CD8-positive, alpha-beta memory T cell (primary cell): ENCODE measurements at regions of chr1 and their contacts with region 1.

Region 1: DNA sequence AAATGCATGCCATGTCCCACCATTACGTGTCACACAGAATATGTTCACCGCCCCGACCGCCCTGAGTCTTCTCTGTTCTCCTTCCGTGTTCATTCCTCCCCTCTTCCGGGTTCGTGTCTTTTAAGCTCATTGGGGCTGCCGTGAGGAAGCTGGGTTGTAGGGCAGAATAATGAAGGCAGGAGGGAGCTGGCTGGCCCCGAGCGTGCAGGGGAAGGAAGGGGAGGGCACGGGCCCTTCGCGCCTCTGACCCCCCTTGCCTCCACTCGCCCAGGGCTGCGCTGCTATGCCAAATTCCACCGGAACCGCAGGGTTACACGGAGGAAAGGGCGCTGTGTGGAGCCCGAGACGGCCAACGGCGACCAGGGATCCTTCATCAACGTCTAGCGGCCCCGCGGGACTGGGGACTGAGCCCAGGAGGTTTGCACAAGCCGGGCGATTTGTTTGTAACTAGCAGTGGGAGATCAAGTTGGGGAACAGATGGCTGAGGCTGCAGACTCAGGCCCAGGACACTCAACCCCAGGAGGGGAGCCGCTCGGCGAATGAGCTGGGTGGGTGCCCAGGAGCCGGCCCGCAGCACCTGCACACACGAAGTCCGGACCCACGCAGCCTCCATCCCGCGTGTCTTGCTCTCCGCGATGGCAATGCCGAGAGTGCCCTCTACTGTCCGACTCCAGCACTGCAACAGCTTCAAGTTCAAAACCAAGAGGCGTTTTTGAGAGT is 16.5 kb upstream of the AGTRAP start:
- DNase-seq: peak; percentile 80 to 90 (median 82)
- H3K4me3 ChIP-seq: peak overlapping the region; percentile 63
- H3K4me3 Mint-ChIP-seq: peak overlapping the region; percentile 67 to 93 (median 84)
- H3K27ac ChIP-seq: peak overlapping the region; percentile 51
- H3K27ac Mint-ChIP-seq: peak overlapping the region; percentile 88 to 98 (median 95)
- H3K4me1 ChIP-seq: peaks cover 12% of the 10 kb centered on the region
- H3K4me1 Mint-ChIP-seq: peaks cover 12 to 16% (median 16%) of the 10 kb centered on the region in 3 donors
- H3K27me3 ChIP-seq: no peaks in the 10 kb centered on the region
- H3K27me3 Mint-ChIP-seq: no peaks in the 10 kb centered on the region

Region 2: GRCh38 chr1:11037740-11038182 is 681.7 kb before region 1 on chr1:
- CTCF ChIA-PET with region 1: interaction called, 12 read pairs
- POLR2A ChIA-PET with region 1: interaction called, 3 read pairs
- DNase-seq: peak; percentile 77 to 90 (median 83)
- H3K4me3 ChIP-seq: no peak overlapping the region
- H3K4me3 Mint-ChIP-seq: no peak overlapping the region
- H3K27ac ChIP-seq: no peak overlapping the region
- H3K27ac Mint-ChIP-seq: no peak overlapping the region
- H3K4me1 ChIP-seq: peaks cover 7% of the 10 kb centered on the region
- H3K4me1 Mint-ChIP-seq: peaks cover 6 to 8% (median 7%) of the 10 kb centered on the region in 3 donors
- H3K27me3 ChIP-seq: peaks cover 4% of the 10 kb centered on the region
- H3K27me3 Mint-ChIP-seq: peaks cover 4 to 9% of the 10 kb centered on the region in 2 donors

Region 3: GRCh38 chr1:11563560-11564069 is 155.9 kb before region 1 on chr1:
- CTCF ChIA-PET with region 1: no interaction called
- POLR2A ChIA-PET with region 1: no interaction called
- DNase-seq: no peak
- H3K4me3 ChIP-seq: no peak overlapping the region
- H3K4me3 Mint-ChIP-seq: no peak overlapping the region
- H3K27ac ChIP-seq: no peak overlapping the region
- H3K27ac Mint-ChIP-seq: no peak overlapping the region
- H3K4me1 ChIP-seq: no peaks in the 10 kb centered on the region
- H3K4me1 Mint-ChIP-seq: no peaks in the 10 kb centered on the region
- H3K27me3 ChIP-seq: no peaks in the 10 kb centered on the region
- H3K27me3 Mint-ChIP-seq: peaks cover 36 to 40% of the 10 kb centered on the region in 2 donors

Region 4: DNA sequence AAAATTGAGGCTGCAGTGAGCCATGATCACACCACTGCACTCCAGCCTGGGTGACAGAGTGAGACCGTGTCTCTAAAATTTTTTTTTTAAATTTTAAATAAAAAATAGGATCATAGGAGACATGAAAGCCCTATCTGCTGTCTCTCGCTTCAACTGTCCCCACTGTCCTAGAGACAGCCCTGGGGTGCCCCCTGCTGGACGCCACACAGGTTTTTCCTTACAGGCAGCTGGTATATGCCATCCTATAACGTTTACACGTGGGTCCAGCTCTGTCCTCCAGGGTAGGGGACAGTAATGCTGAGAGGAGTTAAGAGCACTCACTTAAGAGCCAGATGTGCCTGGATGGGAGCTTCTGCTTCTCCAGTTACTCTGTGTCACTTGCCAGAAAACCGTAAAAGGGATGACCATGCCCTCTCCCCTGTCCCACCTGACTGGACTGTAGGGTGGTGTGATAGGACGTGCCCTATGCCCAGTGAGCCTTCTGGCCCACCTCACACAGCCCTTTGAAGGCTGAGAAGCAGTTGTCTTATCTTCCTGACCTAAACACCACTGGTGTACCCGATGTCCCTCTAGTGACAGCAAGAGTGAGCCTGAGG is 73.7 kb before region 1 on chr1:
- CTCF ChIA-PET with region 1: interaction called, 152 read pairs
- POLR2A ChIA-PET with region 1: interaction called, 29 read pairs
- DNase-seq: peak; percentile 63 to 84 (median 68)
- H3K4me3 ChIP-seq: no peak overlapping the region
- H3K4me3 Mint-ChIP-seq: no peak overlapping the region
- H3K27ac ChIP-seq: no peak overlapping the region
- H3K27ac Mint-ChIP-seq: peak overlapping the region in 1 of 8 donors; percentile 58
- H3K4me1 ChIP-seq: peaks cover 14% of the 10 kb centered on the region
- H3K4me1 Mint-ChIP-seq: peaks cover 11 to 20% (median 14%) of the 10 kb centered on the region in 3 donors
- H3K27me3 ChIP-seq: no peaks in the 10 kb centered on the region
- H3K27me3 Mint-ChIP-seq: peaks cover 0 to 2% of the 10 kb centered on the region in 2 donors

Region 5: GRCh38 chr1:11661103-11661502 is 58.4 kb before region 1 on chr1:
- CTCF ChIA-PET with region 1: interaction called, 152 read pairs
- POLR2A ChIA-PET with region 1: interaction called, 28 read pairs
- DNase-seq: no peak
- H3K4me3 ChIP-seq: no peak overlapping the region
- H3K4me3 Mint-ChIP-seq: peak overlapping the region in 1 of 7 donors; percentile 54
- H3K27ac ChIP-seq: no peak overlapping the region
- H3K27ac Mint-ChIP-seq: peak overlapping the region in 1 of 8 donors; percentile 50
- H3K4me1 ChIP-seq: peaks cover 8% of the 10 kb centered on the region
- H3K4me1 Mint-ChIP-seq: peaks cover under 1 to 7% (median 5%) of the 10 kb centered on the region in 3 donors
- H3K27me3 ChIP-seq: no peaks in the 10 kb centered on the region
- H3K27me3 Mint-ChIP-seq: no peaks in the 10 kb centered on the region

Region 6: GRCh38 chr1:11707621-11708276 is 11.7 kb before region 1 on chr1:
- CTCF ChIA-PET with region 1: interaction called, 11 read pairs
- POLR2A ChIA-PET with region 1: no interaction called
- DNase-seq: no peak
- H3K4me3 ChIP-seq: no peak overlapping the region
- H3K4me3 Mint-ChIP-seq: no peak overlapping the region
- H3K27ac ChIP-seq: no peak overlapping the region
- H3K27ac Mint-ChIP-seq: no peak overlapping the region
- H3K4me1 ChIP-seq: no peaks in the 10 kb centered on the region
- H3K4me1 Mint-ChIP-seq: no peaks in the 10 kb centered on the region
- H3K27me3 ChIP-seq: no peaks in the 10 kb centered on the region
- H3K27me3 Mint-ChIP-seq: peaks cover 2 to 31% of the 10 kb centered on the region in 2 donors